Common myeloid progenitor, CD34-positive (primary cell): ENCODE measurements at regions of chr15 and their contacts with region 1.

Region 1: DNA sequence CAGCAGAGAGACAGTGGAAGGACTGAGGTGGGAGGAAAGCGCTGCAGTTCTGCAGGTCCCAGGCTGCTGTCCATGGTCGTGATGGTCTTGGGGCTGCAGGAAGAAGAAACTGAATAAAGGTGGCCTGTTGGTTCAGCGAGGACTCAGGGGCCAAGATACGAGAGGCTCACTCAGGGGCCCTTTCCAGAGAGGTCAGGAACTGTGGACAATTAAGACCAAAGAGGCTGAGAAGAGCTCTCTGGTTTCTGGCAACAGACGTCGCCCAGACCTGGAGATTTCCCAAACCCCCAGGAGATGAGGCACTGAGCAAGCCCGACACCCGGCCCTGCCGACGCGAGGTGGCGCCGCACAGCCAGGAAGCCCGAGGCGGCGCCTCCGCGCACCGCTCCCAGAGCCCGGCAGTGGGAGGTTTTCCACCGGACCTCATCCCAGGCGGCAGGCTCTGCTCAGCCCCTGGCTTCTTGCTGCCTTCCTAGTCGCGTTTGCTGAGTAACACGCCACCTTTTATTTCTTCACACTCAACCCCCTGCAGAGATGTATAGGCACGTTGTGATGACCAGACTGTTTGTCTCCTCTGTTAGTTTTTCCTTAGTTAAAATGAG is 56.4 kb upstream of the ARRDC4 start:
- DNase-seq: peak; percentile 60 to 70 (median 63)
- H3K4me3 ChIP-seq: peak overlapping the region in 3 of 7 experiments; percentile 21 to 67 (median 57)
- H3K27ac ChIP-seq: no peak overlapping the region
- H3K4me1 ChIP-seq: peaks cover 0 to 8% (median 4%) of the 10 kb centered on the region in 4 experiments
- H3K27me3 ChIP-seq: peaks cover 0 to 17% (median 7%) of the 10 kb centered on the region in 5 experiments

Region 2: GRCh38 chr15:97893967-97894366 is 10.1 kb before region 1 on chr15:
- CTCF ChIA-PET with region 1: interaction called, 10 read pairs
- POLR2A ChIA-PET with region 1: no interaction called
- DNase-seq: peak; percentile 25 to 82 (median 74)
- H3K4me3 ChIP-seq: no peak overlapping the region
- H3K27ac ChIP-seq: no peak overlapping the region
- H3K4me1 ChIP-seq: peaks cover 0 to 4% (median 0%) of the 10 kb centered on the region in 4 experiments
- H3K27me3 ChIP-seq: peaks cover 0 to 5% (median 0%) of the 10 kb centered on the region in 5 experiments

Region 3: DNA sequence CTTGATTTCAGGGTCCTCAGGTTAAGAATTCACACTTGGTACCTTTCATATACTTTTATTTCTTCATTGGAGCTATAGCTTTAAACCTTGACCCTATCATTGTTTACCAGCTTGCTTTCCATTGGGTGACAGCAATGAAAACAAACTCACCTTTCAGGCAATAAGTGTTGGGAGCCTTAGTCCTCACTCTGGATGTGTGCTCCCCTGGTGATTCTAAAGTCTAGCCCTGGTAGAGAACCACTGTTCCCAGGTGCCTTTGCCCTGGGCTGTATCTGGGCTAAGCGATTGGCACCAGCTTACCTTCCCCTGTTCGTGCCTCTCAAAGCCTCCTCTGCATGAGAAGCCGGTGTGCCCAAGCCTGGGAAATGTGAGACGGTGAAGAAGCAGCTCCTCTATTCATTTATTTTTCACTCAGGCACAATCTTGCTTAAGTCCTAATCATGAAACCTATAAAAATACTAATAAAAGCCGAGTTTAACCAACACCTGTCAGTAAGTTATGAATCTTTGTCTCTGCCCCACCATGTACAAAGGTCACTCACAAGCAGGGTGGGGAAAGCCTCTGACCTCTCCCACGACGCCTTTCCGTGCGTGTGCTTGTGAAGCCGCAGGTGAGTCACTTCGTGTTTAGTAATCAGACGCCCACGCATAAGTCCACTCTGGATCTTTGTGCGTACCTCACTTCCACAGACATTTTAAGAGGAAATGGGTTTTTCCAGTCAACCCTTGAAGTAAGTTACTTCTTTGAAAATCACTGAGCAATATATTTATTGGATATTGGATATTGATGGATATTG is 43.6 kb after region 1 on chr15:
- CTCF ChIA-PET with region 1: no interaction called
- POLR2A ChIA-PET with region 1: no interaction called
- DNase-seq: no peak
- H3K4me3 ChIP-seq: no peak overlapping the region
- H3K27ac ChIP-seq: no peak overlapping the region
- H3K4me1 ChIP-seq: no peaks in the 10 kb centered on the region
- H3K27me3 ChIP-seq: no peaks in the 10 kb centered on the region

Region 4: DNA sequence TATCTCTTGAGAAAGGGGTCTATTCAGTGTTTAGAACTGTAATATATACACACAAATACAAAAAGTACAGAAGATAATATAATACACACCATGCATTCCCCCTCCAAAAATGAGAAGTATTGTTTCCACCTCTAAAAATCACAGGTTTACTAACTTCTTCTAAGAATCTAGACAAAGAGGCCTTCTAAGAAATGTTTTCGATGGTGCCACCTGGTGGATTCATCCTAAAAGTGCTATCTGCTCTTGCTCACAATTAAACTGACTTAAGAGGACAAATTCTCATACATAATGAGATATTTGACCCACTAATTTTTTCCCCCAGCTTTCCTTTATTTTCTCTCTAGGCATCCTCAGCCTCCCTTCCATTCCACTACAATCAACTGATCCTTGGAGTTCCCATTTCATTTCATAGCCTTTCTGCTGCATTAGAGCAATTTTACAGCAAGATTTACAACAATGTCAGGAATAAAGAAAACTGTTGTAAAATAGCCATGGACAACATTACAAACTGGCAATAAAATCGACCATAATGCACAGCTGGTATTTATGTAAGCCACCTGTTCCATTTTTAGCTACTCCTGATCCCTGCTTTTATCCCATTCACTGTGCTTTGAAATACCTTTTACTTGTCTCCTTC is 181.0 kb after region 1 on chr15:
- CTCF ChIA-PET with region 1: interaction called, 29 read pairs
- POLR2A ChIA-PET with region 1: no interaction called
- DNase-seq: peak; percentile 76 to 90 (median 84)
- H3K4me3 ChIP-seq: no peak overlapping the region
- H3K27ac ChIP-seq: no peak overlapping the region
- H3K4me1 ChIP-seq: no peaks in the 10 kb centered on the region
- H3K27me3 ChIP-seq: no peaks in the 10 kb centered on the region

Region 5: GRCh38 chr15:98177924-98178592 is 274.0 kb after region 1 on chr15:
- CTCF ChIA-PET with region 1: interaction called, 112 read pairs
- POLR2A ChIA-PET with region 1: interaction called, 4 read pairs
- DNase-seq: peak; percentile 80 to 83 (median 81)
- H3K4me3 ChIP-seq: no peak overlapping the region
- H3K27ac ChIP-seq: no peak overlapping the region
- H3K4me1 ChIP-seq: peaks cover 0 to 8% (median 0%) of the 10 kb centered on the region in 4 experiments
- H3K27me3 ChIP-seq: peaks cover 0 to 22% (median 8%) of the 10 kb centered on the region in 5 experiments